Kidney (tissue), 22 donors: ENCODE measurements at regions of chr3 and their contacts with region 1.

Region 1: GRCh38 chr3:195240171-195240748 is 30.7 kb downstream of the XXYLT1 start:
- DNase-seq: peak in 1 of 5 donors; percentile 87
- H3K4me3 ChIP-seq: no peak overlapping the region
- H3K27ac ChIP-seq: no peak overlapping the region
- H3K4me1 ChIP-seq: peaks cover 0 to 14% (median 3%) of the 10 kb centered on the region in 3 donors
- H3K27me3 ChIP-seq: no peaks in the 10 kb centered on the region
- CTCF ChIP-seq: no peak

Region 2: GRCh38 chr3:195129644-195130492 is 110.4 kb before region 1 on chr3:
- intact Hi-C with region 1: loop called (anchors 10 kb)
- DNase-seq: no peak
- H3K4me3 ChIP-seq: no peak overlapping the region
- H3K27ac ChIP-seq: no peak overlapping the region
- H3K4me1 ChIP-seq: peaks cover 0 to 2% (median 2%) of the 10 kb centered on the region in 3 donors
- H3K27me3 ChIP-seq: no peaks in the 10 kb centered on the region
- CTCF ChIP-seq: no peak

Region 3: DNA sequence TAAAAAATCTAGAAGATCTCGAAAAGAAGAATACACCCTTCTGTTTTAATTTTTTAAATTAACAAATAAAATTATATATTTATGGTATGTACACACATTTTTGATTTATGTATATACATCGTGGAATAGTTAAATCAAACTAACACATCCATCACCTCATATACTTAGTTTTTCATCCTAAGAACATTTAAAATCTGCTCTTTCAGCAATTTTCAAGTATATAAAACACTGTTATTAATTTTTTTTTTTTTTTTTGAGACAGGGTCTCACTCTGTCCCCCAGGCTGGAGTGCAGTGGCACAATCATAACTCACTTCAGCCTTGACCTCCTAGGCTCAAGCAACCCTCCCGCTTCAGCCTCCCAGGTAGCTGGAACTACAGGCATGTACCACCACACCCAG is 235.4 kb after region 1 on chr3:
- intact Hi-C with region 1: no loop called
- DNase-seq: no peak
- H3K4me3 ChIP-seq: no peak overlapping the region
- H3K27ac ChIP-seq: no peak overlapping the region
- H3K4me1 ChIP-seq: no peaks in the 10 kb centered on the region
- H3K27me3 ChIP-seq: no peaks in the 10 kb centered on the region
- CTCF ChIP-seq: no peak